ENCODE measurements at regions of chr1 and their contacts with region 1.

Region 1: DNA sequence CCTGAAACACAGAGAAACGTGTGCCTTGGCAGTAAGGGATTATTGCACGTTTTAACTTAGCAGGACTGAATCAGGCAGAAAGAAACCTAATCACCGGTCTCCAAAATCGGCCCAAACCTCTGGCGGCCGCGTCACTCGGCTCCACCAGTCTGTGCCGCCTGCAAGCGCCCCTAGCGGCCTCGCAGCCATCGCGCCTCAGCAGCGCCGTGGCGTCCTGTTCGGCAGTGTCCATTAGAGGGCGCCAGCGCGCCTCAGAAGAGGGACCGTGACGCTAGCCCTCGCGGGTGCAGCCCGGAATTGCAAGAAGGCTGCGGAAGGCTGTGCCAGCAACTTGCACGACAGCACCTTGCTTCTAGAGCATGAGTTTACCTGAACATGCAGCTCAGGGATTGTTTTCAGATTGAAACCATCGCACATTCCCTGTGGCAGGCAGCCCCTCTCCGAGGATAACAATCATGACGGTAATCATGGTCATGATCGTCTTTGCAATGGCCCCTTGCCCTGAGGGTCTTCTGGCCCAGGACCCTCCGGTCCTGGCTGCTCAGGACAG is 164.4 kb downstream of the TRIM33 start:
- DNase-seq: peak; percentile 99
- ATAC-seq: peak; percentile 84 to 98 (median 88)
- H3K4me3 ChIP-seq: peak overlapping the region; percentile 8
- H3K4me3 Mint-ChIP-seq: peak overlapping the region; percentile 93
- H3K27ac ChIP-seq: peak overlapping the region; percentile 47
- H3K27ac Mint-ChIP-seq: peak overlapping the region; percentile 96 to 98
- H3K4me1 ChIP-seq: peaks cover 57% of the 10 kb centered on the region
- H3K4me1 Mint-ChIP-seq: peaks cover 50 to 52% of the 10 kb centered on the region in 2 donors
- H3K27me3 ChIP-seq: no peaks in the 10 kb centered on the region
- H3K27me3 Mint-ChIP-seq: no peaks in the 10 kb centered on the region
- CTCF ChIP-seq: peak; percentile 100

Region 2: GRCh38 chr1:113871597-113872113 is 474.9 kb before region 1 on chr1 and contains the start of gene PTPN22:
- intact Hi-C with region 1: loop called (anchors 1 kb)
- DNase-seq: peak; percentile 75 to 94
- ATAC-seq: peak; percentile 75 to 93 (median 92)
- H3K4me3 ChIP-seq: peak within 1 kb of the TSS; percentile 70
- H3K4me3 Mint-ChIP-seq: peak within 1 kb of the TSS; percentile 94
- H3K27ac ChIP-seq: peak within 1 kb of the TSS; percentile 92
- H3K27ac Mint-ChIP-seq: peak within 1 kb of the TSS; percentile 87 to 95
- H3K4me1 ChIP-seq: peaks cover 49% of the 10 kb centered on the region
- H3K4me1 Mint-ChIP-seq: peaks cover 78 to 85% of the 10 kb centered on the region in 2 donors
- H3K27me3 ChIP-seq: no peaks in the 10 kb centered on the region
- H3K27me3 Mint-ChIP-seq: no peaks in the 10 kb centered on the region
- CTCF ChIP-seq: no peak
- total RNA-seq, gene PTPN22: 98.4 to 122 (median 104) TPM

Region 3: GRCh38 chr1:113978863-113979702 is 367.5 kb before region 1 on chr1 and contains the start of gene OLFML3:
- intact Hi-C with region 1: loop called (anchors 2 kb)
- DNase-seq: peak; percentile 49 to 70
- ATAC-seq: peak; percentile 27 to 42 (median 37)
- H3K4me3 ChIP-seq: no peak within 1 kb of the TSS
- H3K4me3 Mint-ChIP-seq: peak within 1 kb of the TSS; percentile 42
- H3K27ac ChIP-seq: no peak within 1 kb of the TSS
- H3K27ac Mint-ChIP-seq: peak within 1 kb of the TSS; percentile 49 to 83
- H3K4me1 ChIP-seq: peaks cover 35% of the 10 kb centered on the region
- H3K4me1 Mint-ChIP-seq: peaks cover 54 to 65% of the 10 kb centered on the region in 2 donors
- H3K27me3 ChIP-seq: no peaks in the 10 kb centered on the region
- H3K27me3 Mint-ChIP-seq: no peaks in the 10 kb centered on the region
- CTCF ChIP-seq: peak; percentile 76
- total RNA-seq, gene OLFML3: 0.16 TPM in 1 of 3 donors, not detected in the others

Region 4: DNA sequence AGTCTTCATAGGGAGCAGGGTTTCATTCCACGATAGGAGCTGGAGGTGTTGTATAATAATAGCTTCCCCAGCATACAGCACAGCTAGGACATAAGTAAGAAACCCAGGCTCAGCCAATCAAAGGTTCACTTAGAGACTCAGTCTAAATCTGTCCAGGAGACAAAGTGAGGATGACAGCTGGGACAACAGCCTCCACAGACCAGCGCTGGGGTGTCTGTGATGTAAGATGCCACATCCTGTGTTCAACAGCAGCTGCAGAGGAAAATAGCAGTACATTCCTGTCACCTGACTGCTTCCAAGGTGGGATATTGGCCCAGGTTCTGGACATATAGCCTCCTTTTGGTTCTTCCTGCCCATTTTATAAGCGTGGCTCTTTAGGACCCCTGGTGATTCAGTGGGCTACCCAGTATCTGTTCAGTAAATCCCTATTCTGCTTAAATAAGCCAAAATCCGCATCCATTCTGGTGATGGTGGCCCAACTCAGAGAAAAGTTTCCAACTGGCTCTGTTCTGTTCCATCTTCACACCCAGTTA is 16.0 kb before region 1 on chr1:
- intact Hi-C with region 1: loop called (anchors 1 kb)
- DNase-seq: peak; percentile 32 to 66
- ATAC-seq: peak; percentile 77 to 90 (median 88)
- H3K4me3 ChIP-seq: no peak overlapping the region
- H3K4me3 Mint-ChIP-seq: peak overlapping the region; percentile 83
- H3K27ac ChIP-seq: peak overlapping the region; percentile 24
- H3K27ac Mint-ChIP-seq: peak overlapping the region; percentile 84 to 86
- H3K4me1 ChIP-seq: peaks cover 52% of the 10 kb centered on the region
- H3K4me1 Mint-ChIP-seq: peaks cover 76 to 81% of the 10 kb centered on the region in 2 donors
- H3K27me3 ChIP-seq: no peaks in the 10 kb centered on the region
- H3K27me3 Mint-ChIP-seq: no peaks in the 10 kb centered on the region
- CTCF ChIP-seq: no peak

Region 5: GRCh38 chr1:114435107-114435715 is 88.7 kb after region 1 on chr1:
- intact Hi-C with region 1: no loop called
- DNase-seq: no peak
- ATAC-seq: no peak
- H3K4me3 ChIP-seq: no peak overlapping the region
- H3K4me3 Mint-ChIP-seq: no peak overlapping the region
- H3K27ac ChIP-seq: no peak overlapping the region
- H3K27ac Mint-ChIP-seq: peak overlapping the region in 1 of 2 donors; percentile 23
- H3K4me1 ChIP-seq: no peaks in the 10 kb centered on the region
- H3K4me1 Mint-ChIP-seq: peaks cover 24 to 28% of the 10 kb centered on the region in 2 donors
- H3K27me3 ChIP-seq: no peaks in the 10 kb centered on the region
- H3K27me3 Mint-ChIP-seq: no peaks in the 10 kb centered on the region
- CTCF ChIP-seq: no peak

Region 6: GRCh38 chr1:114511032-114511785 is 164.7 kb after region 1 on chr1 and contains the start of gene TRIM33:
- intact Hi-C with region 1: loop called (anchors 5 kb)
- DNase-seq: peak; percentile 91 to 98
- ATAC-seq: peak; percentile 76 to 93 (median 81)
- H3K4me3 ChIP-seq: peak within 1 kb of the TSS; percentile 89
- H3K4me3 Mint-ChIP-seq: peak within 1 kb of the TSS; percentile 100
- H3K27ac ChIP-seq: peak within 1 kb of the TSS; percentile 92
- H3K27ac Mint-ChIP-seq: peak within 1 kb of the TSS; percentile 100
- H3K4me1 ChIP-seq: peaks cover 30% of the 10 kb centered on the region
- H3K4me1 Mint-ChIP-seq: peaks cover 48 to 57% of the 10 kb centered on the region in 2 donors
- H3K27me3 ChIP-seq: no peaks in the 10 kb centered on the region
- H3K27me3 Mint-ChIP-seq: no peaks in the 10 kb centered on the region
- CTCF ChIP-seq: no peak
- total RNA-seq, gene TRIM33: 70.6 to 91.5 (median 86.1) TPM

Region 7: GRCh38 chr1:114581335-114582287 is 235.1 kb after region 1 on chr1 and contains the start of gene BCAS2:
- intact Hi-C with region 1: loop called (anchors 5 kb)
- DNase-seq: peak; percentile 91 to 99
- ATAC-seq: peak; percentile 93 to 97 (median 95)
- H3K4me3 ChIP-seq: peak within 1 kb of the TSS; percentile 75
- H3K4me3 Mint-ChIP-seq: peak within 1 kb of the TSS; percentile 96
- H3K27ac ChIP-seq: peak within 1 kb of the TSS; percentile 95
- H3K27ac Mint-ChIP-seq: peak within 1 kb of the TSS; percentile 98 to 99
- H3K4me1 ChIP-seq: peaks cover 8% of the 10 kb centered on the region
- H3K4me1 Mint-ChIP-seq: peaks cover 30 to 33% of the 10 kb centered on the region in 2 donors
- H3K27me3 ChIP-seq: peaks cover 4% of the 10 kb centered on the region
- H3K27me3 Mint-ChIP-seq: peaks cover 4 to 21% of the 10 kb centered on the region in 2 donors
- CTCF ChIP-seq: no peak
- total RNA-seq, gene BCAS2: 45.5 to 76.7 (median 62.0) TPM

Region 8: GRCh38 chr1:115062542-115063011 is 716.0 kb after region 1 on chr1:
- intact Hi-C with region 1: loop called (anchors 5 kb)
- DNase-seq: peak; percentile 87 to 97
- ATAC-seq: peak; percentile 90 to 99 (median 98)
- H3K4me3 ChIP-seq: no peak overlapping the region
- H3K4me3 Mint-ChIP-seq: peak overlapping the region; percentile 76
- H3K27ac ChIP-seq: peak overlapping the region; percentile 72
- H3K27ac Mint-ChIP-seq: peak overlapping the region; percentile 88 to 98
- H3K4me1 ChIP-seq: peaks cover 24% of the 10 kb centered on the region
- H3K4me1 Mint-ChIP-seq: peaks cover 51 to 62% of the 10 kb centered on the region in 2 donors
- H3K27me3 ChIP-seq: no peaks in the 10 kb centered on the region
- H3K27me3 Mint-ChIP-seq: no peaks in the 10 kb centered on the region
- CTCF ChIP-seq: no peak